GM12878 (cell line): ENCODE measurements at regions of chr6 and their contacts with region 1.

Region 1: DNA sequence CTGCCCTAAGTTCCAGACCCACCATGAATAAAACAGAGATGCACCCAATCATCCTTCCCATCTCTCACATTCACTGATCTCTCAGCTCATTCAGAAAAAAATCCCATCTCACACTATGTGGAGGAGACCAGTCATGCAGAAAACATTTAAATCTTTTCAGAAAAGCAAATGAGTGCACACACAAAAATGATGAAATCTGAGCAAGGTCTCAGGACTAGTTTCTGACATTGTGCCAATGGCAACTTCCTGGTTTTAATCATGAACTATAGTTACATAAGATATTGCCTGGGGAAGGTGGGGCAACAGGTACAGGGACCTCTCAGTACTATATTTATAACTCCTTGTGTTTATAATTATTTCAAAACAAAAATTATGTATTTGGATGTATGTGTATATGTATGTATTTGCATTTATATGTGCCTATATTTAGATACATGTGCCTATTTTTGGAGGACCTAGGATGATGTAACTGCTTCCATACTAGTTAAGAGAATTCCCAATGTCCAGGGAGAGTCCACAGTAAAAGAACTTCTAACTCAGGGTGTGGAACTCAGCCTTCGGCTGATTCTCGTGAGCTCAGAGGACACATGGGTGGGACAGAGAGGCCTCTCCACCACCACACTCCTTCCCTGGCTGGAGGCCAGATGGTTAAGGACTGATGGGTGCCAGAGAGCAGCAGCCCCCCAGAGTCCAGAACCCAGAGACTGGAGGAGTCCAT is 71.7 kb upstream of the MAP3K4 start:
- DNase-seq: no peak
- ATAC-seq: no peak
- H3K4me3 ChIP-seq: no peak overlapping the region
- H3K27ac ChIP-seq: no peak overlapping the region
- H3K4me1 ChIP-seq: no peaks in the 10 kb centered on the region
- H3K27me3 ChIP-seq: no peaks in the 10 kb centered on the region
- CTCF ChIP-seq: no peak
- EP300 ChIP-seq: no peak
- POLR2A ChIP-seq: no peak
- RAD21 ChIP-seq: no peak

Region 2: DNA sequence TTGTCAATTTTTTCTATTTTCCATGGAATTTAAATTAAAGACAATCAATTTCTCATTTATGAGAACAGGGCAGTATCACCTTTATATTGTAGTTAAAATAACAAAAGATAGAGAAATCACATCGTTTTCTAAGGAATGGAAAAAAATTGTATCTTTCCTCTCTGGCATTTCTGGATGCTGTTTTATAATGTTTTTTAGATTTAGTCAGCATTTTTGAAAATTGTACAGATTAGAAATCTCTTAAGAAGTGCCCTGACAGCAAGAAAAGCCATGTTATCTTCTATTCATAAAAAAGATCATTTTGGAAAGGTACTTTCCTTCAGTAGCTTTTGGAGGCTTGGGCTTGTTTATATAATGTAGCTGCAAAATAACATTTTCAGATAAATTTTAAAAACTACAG is 100.9 kb before region 1 on chr6:
- CTCF ChIA-PET with region 1: no interaction called
- POLR2A ChIA-PET with region 1: no interaction called
- RAD21 ChIA-PET with region 1: no interaction called
- SMC1A ChIA-PET with region 1: no interaction called
- in situ Hi-C with region 1: no loop called
- intact Hi-C with region 1: no loop called
- DNase-seq: no peak
- ATAC-seq: no peak
- H3K4me3 ChIP-seq: no peak overlapping the region
- H3K27ac ChIP-seq: no peak overlapping the region
- H3K4me1 ChIP-seq: no peaks in the 10 kb centered on the region
- H3K27me3 ChIP-seq: no peaks in the 10 kb centered on the region
- CTCF ChIP-seq: no peak
- EP300 ChIP-seq: no peak
- POLR2A ChIP-seq: no peak
- RAD21 ChIP-seq: no peak

Region 3: GRCh38 chr6:160950507-160950906 is 30.6 kb after region 1 on chr6:
- CTCF ChIA-PET with region 1: no interaction called
- POLR2A ChIA-PET with region 1: no interaction called
- RAD21 ChIA-PET with region 1: no interaction called
- SMC1A ChIA-PET with region 1: no interaction called
- in situ Hi-C with region 1: no loop called
- intact Hi-C with region 1: no loop called
- DNase-seq: no peak
- ATAC-seq: no peak
- H3K4me3 ChIP-seq: no peak overlapping the region
- H3K27ac ChIP-seq: no peak overlapping the region
- H3K4me1 ChIP-seq: no peaks in the 10 kb centered on the region
- H3K27me3 ChIP-seq: no peaks in the 10 kb centered on the region
- CTCF ChIP-seq: no peak
- EP300 ChIP-seq: no peak
- POLR2A ChIP-seq: no peak
- RAD21 ChIP-seq: no peak

Region 4: DNA sequence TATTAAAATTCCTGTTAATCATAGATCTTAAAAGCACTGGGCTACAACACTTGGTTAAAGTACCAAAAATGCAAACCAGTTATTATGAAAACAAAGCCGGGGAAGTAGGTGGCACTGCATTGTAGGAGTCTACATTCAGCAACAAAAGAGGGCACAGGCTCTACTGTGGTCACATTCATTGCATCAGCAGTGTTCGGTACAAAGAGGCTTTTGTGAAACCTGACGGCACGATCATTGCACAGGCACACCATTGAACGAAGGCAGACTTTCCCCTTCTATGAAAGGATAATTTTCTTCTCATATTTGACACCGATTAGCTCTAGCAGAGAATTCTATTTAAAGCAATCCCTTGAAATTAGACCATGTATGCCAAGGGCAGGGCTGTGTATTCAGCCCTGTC is 398.6 kb after region 1 on chr6:
- CTCF ChIA-PET with region 1: no interaction called
- POLR2A ChIA-PET with region 1: no interaction called
- RAD21 ChIA-PET with region 1: no interaction called
- SMC1A ChIA-PET with region 1: no interaction called
- in situ Hi-C with region 1: no loop called
- intact Hi-C with region 1: loop called (anchors 5 kb)
- DNase-seq: no peak
- ATAC-seq: no peak
- H3K4me3 ChIP-seq: no peak overlapping the region
- H3K27ac ChIP-seq: no peak overlapping the region
- H3K4me1 ChIP-seq: no peaks in the 10 kb centered on the region
- H3K27me3 ChIP-seq: no peaks in the 10 kb centered on the region
- CTCF ChIP-seq: no peak
- EP300 ChIP-seq: no peak
- POLR2A ChIP-seq: no peak
- RAD21 ChIP-seq: no peak

Region 5: DNA sequence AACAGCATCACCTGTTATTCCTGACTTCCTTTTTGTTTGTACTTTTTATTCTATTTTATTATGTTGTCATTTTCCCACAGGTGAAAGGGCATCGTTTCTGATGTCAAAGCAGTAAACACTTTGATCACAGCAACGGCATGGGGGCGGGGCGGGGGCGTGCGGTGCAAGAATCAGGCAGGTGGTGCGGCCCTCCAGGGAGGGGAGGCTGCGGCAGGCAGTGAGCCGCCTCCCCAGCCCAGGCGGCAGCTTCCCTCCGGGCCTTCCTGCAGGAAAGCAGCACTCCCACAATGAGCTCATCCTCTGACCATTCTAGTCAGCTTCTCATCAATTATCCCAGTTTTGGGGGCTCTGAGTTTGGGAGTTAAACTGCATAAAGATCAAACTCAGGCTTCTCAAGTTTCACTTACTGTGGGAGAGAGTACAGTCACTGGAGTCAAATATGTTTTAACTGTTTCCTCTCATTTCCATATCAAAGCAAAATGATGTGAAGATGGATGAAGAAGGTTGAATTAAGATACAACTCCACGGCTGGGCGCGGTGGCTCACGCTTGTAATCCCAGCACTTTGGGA is 962.4 kb after region 1 on chr6:
- CTCF ChIA-PET with region 1: no interaction called
- POLR2A ChIA-PET with region 1: no interaction called
- RAD21 ChIA-PET with region 1: no interaction called
- SMC1A ChIA-PET with region 1: no interaction called
- in situ Hi-C with region 1: no loop called
- intact Hi-C with region 1: no loop called
- DNase-seq: no peak
- ATAC-seq: no peak
- H3K4me3 ChIP-seq: no peak overlapping the region
- H3K27ac ChIP-seq: no peak overlapping the region
- H3K4me1 ChIP-seq: no peaks in the 10 kb centered on the region
- H3K27me3 ChIP-seq: no peaks in the 10 kb centered on the region
- CTCF ChIP-seq: no peak
- EP300 ChIP-seq: no peak
- POLR2A ChIP-seq: no peak
- RAD21 ChIP-seq: no peak